ENCODE measurements at regions of chr12 and their contacts with region 1.

Region 1: DNA sequence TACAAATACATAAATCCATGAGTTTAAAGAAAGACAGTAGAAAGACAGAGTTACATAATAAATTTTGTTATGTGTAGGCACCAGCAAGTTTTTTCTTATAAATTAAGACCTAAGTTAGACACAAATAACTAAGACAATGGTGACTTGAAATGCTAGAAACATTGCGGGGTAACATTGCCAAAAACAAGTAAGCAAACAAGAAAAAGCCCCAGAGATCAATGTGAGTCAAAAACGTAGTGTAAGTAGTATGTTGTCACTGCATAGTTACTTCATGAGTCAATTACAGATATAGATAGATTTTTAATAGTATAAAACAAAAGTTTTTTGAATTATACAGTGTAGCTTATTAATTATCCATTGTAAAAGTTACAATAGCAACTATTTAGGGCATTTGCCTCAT is 83.4 kb downstream of the CNTN1 start:
- DNase-seq: no peak
- ATAC-seq: no peak
- H3K4me3 ChIP-seq: no peak overlapping the region
- H3K27ac ChIP-seq: no peak overlapping the region
- H3K4me1 ChIP-seq: no peaks in the 10 kb centered on the region
- H3K27me3 ChIP-seq: no peaks in the 10 kb centered on the region
- CTCF ChIP-seq: no peak
- EP300 ChIP-seq: no peak
- POLR2A ChIP-seq: no peak
- RAD21 ChIP-seq: no peak

Region 2: GRCh38 chr12:40752011-40752410 is 23.6 kb before region 1 on chr12:
- CTCF ChIA-PET with region 1: no interaction called
- POLR2A ChIA-PET with region 1: no interaction called
- in situ Hi-C with region 1: no loop called
- intact Hi-C with region 1: loop called (anchors 2 kb)
- DNase-seq: peak; percentile 32
- ATAC-seq: no peak
- H3K4me3 ChIP-seq: no peak overlapping the region
- H3K27ac ChIP-seq: no peak overlapping the region
- H3K4me1 ChIP-seq: no peaks in the 10 kb centered on the region
- H3K27me3 ChIP-seq: no peaks in the 10 kb centered on the region
- CTCF ChIP-seq: no peak
- EP300 ChIP-seq: no peak
- POLR2A ChIP-seq: no peak
- RAD21 ChIP-seq: no peak

Region 3: GRCh38 chr12:40762072-40762471 is 13.6 kb before region 1 on chr12:
- CTCF ChIA-PET with region 1: no interaction called
- POLR2A ChIA-PET with region 1: no interaction called
- in situ Hi-C with region 1: no loop called
- intact Hi-C with region 1: no loop called
- DNase-seq: no peak
- ATAC-seq: no peak
- H3K4me3 ChIP-seq: no peak overlapping the region
- H3K27ac ChIP-seq: no peak overlapping the region
- H3K4me1 ChIP-seq: no peaks in the 10 kb centered on the region
- H3K27me3 ChIP-seq: no peaks in the 10 kb centered on the region
- CTCF ChIP-seq: no peak
- EP300 ChIP-seq: no peak
- POLR2A ChIP-seq: no peak
- RAD21 ChIP-seq: no peak

Measured in HepG2 (cell line).